ENCODE measurements at regions of chr10 and their contacts with region 1.

Region 1: GRCh38 chr10:80444646-80445319 is 9.3 kb upstream of the TSPAN14 start:
- DNase-seq: peak; percentile 73 to 89 (median 78)
- H3K4me3 ChIP-seq: no peak overlapping the region
- H3K27ac ChIP-seq: no peak overlapping the region
- H3K4me1 ChIP-seq: peaks cover 0 to 25% (median 22%) of the 10 kb centered on the region in 4 experiments
- H3K27me3 ChIP-seq: no peaks in the 10 kb centered on the region

Region 2: DNA sequence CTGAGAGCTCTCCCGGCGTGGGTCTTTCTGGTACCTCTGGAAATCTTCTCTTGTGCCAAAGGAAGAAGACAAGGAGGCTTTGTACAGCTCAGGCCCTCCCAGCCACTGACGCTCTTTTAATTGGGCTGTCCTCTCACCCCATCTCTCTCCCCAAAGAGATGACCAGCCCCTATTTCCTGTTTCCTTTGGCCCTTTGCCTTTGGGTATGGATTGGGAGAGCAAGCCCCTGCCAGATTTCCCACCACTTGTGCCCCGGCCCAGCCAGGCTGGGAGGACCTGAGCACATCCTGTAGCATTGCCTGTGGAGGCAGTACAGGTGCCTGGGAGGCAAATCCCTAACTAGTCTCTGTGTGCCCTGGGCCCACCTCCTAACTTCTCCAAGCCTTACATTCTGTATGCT is 317.9 kb before region 1 on chr10:
- CTCF ChIA-PET with region 1: no interaction called
- POLR2A ChIA-PET with region 1: no interaction called
- DNase-seq: no peak
- H3K4me3 ChIP-seq: no peak overlapping the region
- H3K27ac ChIP-seq: no peak overlapping the region
- H3K4me1 ChIP-seq: no peaks in the 10 kb centered on the region
- H3K27me3 ChIP-seq: peaks cover 0 to 11% (median 3%) of the 10 kb centered on the region in 5 experiments

Region 3: GRCh38 chr10:80413271-80413996 is 31.3 kb before region 1 on chr10:
- CTCF ChIA-PET with region 1: interaction called, 16 read pairs
- POLR2A ChIA-PET with region 1: no interaction called
- DNase-seq: peak in 2 of 3 donors; percentile 36 to 45
- H3K4me3 ChIP-seq: peak overlapping the region in 1 of 7 experiments; percentile 8
- H3K27ac ChIP-seq: no peak overlapping the region
- H3K4me1 ChIP-seq: peaks cover 4 to 71% (median 56%) of the 10 kb centered on the region in 4 experiments
- H3K27me3 ChIP-seq: no peaks in the 10 kb centered on the region

Region 4: DNA sequence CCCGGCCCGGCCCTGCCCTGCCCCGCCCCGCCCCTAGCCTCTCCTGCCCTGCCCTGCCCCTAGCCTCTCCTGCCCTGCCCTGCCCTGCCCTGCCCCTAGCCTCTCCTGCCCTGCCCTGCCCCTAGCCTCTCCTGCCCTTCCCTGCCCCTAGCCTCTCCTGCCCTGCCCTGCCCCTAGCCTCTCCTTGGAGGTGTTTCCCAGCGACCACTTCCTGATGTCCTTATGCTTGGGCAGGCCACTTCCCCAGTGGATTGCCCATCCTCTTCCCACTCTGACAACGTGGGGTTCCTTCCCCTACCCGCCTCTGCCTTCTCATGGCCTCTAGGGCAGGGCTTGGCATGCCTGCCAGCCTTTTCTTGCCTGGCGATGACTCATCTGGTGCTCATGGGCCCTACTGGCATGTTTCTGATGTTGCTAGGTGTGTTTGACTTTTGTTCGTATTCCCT is 15.2 kb before region 1 on chr10:
- CTCF ChIA-PET with region 1: interaction called, 17 read pairs
- POLR2A ChIA-PET with region 1: no interaction called
- DNase-seq: peak in 1 of 3 donors; percentile 20
- H3K4me3 ChIP-seq: no peak overlapping the region
- H3K27ac ChIP-seq: no peak overlapping the region
- H3K4me1 ChIP-seq: no peaks in the 10 kb centered on the region
- H3K27me3 ChIP-seq: no peaks in the 10 kb centered on the region

Region 5: GRCh38 chr10:80472234-80473095 is 27.7 kb after region 1 on chr10:
- CTCF ChIA-PET with region 1: interaction called, 58 read pairs
- POLR2A ChIA-PET with region 1: no interaction called
- DNase-seq: no peak
- H3K4me3 ChIP-seq: no peak overlapping the region
- H3K27ac ChIP-seq: no peak overlapping the region
- H3K4me1 ChIP-seq: peaks cover 4 to 17% (median 15%) of the 10 kb centered on the region in 4 experiments
- H3K27me3 ChIP-seq: no peaks in the 10 kb centered on the region

Region 6: GRCh38 chr10:80493522-80494051 is 48.8 kb after region 1 on chr10:
- CTCF ChIA-PET with region 1: interaction called, 571 read pairs
- POLR2A ChIA-PET with region 1: no interaction called
- DNase-seq: peak; percentile 28 to 75 (median 62)
- H3K4me3 ChIP-seq: peak overlapping the region in 2 of 7 experiments; percentile 10 to 21
- H3K27ac ChIP-seq: peak overlapping the region in 1 of 2 experiments; percentile 55
- H3K4me1 ChIP-seq: peaks cover 25 to 68% (median 48%) of the 10 kb centered on the region in 4 experiments
- H3K27me3 ChIP-seq: no peaks in the 10 kb centered on the region